Colonic mucosa (tissue), 4 donors: ENCODE measurements at regions of chr5 and their contacts with region 1.

Region 1: GRCh38 chr5:181223058-181223728 is at the start of gene TRIM41:
- DNase-seq: peak; percentile 99
- H3K4me3 ChIP-seq: peak within 1 kb of the TSS; percentile 71
- H3K27ac ChIP-seq: peak within 1 kb of the TSS; percentile 97
- H3K4me1 ChIP-seq: no peaks in the 10 kb centered on the region
- H3K27me3 ChIP-seq: no peaks in the 10 kb centered on the region
- CTCF ChIP-seq: no peak
- total RNA-seq, gene TRIM41: 22.2 to 41.1 TPM

Region 2: GRCh38 chr5:181187500-181188213 is 35.5 kb before region 1 on chr5:
- intact Hi-C with region 1: loop called (anchors 2 kb)
- DNase-seq: peak; percentile 80
- H3K4me3 ChIP-seq: peak overlapping the region; percentile 81
- H3K27ac ChIP-seq: peak overlapping the region; percentile 28
- H3K4me1 ChIP-seq: peaks cover 6% of the 10 kb centered on the region
- H3K27me3 ChIP-seq: no peaks in the 10 kb centered on the region
- CTCF ChIP-seq: no peak